A673 (cell line): ENCODE measurements at regions of chr22 and their contacts with region 1.

Region 1: GRCh38 chr22:29040385-29041275 is 21.0 kb downstream of the C22orf31 start:
- DNase-seq: peak; percentile 83
- H3K4me3 ChIP-seq: no peak overlapping the region
- H3K27ac ChIP-seq: no peak overlapping the region
- H3K4me1 ChIP-seq: no peaks in the 10 kb centered on the region
- H3K27me3 ChIP-seq: no peaks in the 10 kb centered on the region
- CTCF ChIP-seq: peak; percentile 98

Region 2: DNA sequence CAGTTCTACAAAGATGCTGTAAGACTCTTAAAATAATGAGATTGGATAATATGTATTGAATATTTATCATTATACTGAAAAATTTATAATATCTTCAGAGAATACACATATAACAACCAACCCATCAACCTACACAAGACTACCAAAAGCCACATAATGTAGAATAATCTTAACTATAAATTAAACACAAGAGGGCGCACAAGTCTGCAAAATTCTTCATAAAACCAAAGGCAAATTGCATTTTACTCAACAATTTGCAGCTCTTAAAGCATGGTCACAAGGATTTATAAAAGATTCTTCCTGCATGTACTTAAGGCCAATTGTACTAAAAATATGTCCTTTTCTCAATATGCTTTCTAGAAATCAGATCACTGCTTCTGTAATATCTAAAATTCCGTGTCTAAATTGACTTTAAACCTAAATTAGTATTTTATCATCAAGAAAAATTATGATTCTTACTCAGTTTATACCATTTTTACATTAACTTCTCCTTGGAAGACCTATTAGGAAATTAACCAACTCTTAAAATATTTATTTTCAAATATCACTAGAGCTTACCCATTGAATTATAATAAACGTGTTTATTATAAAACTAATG is 440.0 kb before region 1 on chr22:
- CTCF ChIA-PET with region 1: interaction called, 9 read pairs
- POLR2A ChIA-PET with region 1: no interaction called
- intact Hi-C with region 1: loop called (anchors 1 kb)
- DNase-seq: peak; percentile 81
- H3K4me3 ChIP-seq: no peak overlapping the region
- H3K27ac ChIP-seq: no peak overlapping the region
- H3K4me1 ChIP-seq: peaks cover 20% of the 10 kb centered on the region
- H3K27me3 ChIP-seq: no peaks in the 10 kb centered on the region
- CTCF ChIP-seq: peak; percentile 68

Region 3: GRCh38 chr22:28841111-28841510 is 199.5 kb before region 1 on chr22:
- CTCF ChIA-PET with region 1: interaction called, 7 read pairs
- POLR2A ChIA-PET with region 1: interaction called, 15 read pairs
- intact Hi-C with region 1: no loop called
- DNase-seq: no peak
- H3K4me3 ChIP-seq: no peak overlapping the region
- H3K27ac ChIP-seq: no peak overlapping the region
- H3K4me1 ChIP-seq: no peaks in the 10 kb centered on the region
- H3K27me3 ChIP-seq: no peaks in the 10 kb centered on the region
- CTCF ChIP-seq: no peak

Region 4: DNA sequence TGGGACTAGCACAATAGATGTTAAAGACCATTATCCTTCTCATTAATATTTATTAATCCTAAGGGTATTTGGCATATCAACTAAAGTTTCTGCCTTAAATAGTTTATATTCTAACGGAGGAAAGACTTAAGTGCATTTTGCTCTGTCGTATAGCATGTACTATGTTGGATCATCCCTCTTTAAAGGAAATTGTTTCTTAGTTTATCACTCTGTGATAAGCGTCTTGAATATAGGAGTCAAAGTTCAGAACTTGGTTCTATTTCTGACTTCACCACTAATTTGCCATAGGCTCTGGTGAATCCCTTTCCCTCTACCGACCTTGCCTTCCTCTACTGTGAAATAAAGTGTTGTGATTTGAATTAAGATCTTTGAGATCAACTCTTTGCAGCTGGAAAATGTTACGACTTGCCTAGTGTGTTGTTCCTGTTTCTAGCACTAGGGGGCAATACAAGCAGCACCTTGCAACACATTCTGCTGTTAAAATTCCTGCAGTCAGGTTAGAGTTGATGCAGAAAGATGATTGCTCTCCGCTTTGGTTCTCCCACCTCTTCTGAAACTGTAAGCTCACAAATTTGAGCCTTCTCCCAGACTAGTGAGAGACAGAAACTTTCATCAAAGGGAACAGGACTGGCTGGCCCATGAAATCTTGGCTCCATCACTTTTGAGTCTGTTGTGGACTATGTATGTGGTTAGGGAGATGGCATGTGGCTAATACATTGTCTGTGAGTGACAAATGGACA is 185.1 kb before region 1 on chr22:
- CTCF ChIA-PET with region 1: interaction called, 54 read pairs
- POLR2A ChIA-PET with region 1: no interaction called
- intact Hi-C with region 1: loop called (anchors 1 kb)
- DNase-seq: peak; percentile 76
- H3K4me3 ChIP-seq: no peak overlapping the region
- H3K27ac ChIP-seq: no peak overlapping the region
- H3K4me1 ChIP-seq: no peaks in the 10 kb centered on the region
- H3K27me3 ChIP-seq: no peaks in the 10 kb centered on the region
- CTCF ChIP-seq: peak; percentile 95

Region 5: GRCh38 chr22:28958611-28959010 is 82.0 kb before region 1 on chr22:
- CTCF ChIA-PET with region 1: no interaction called
- POLR2A ChIA-PET with region 1: no interaction called
- intact Hi-C with region 1: no loop called
- DNase-seq: no peak
- H3K4me3 ChIP-seq: no peak overlapping the region
- H3K27ac ChIP-seq: no peak overlapping the region
- H3K4me1 ChIP-seq: peaks cover under 1% of the 10 kb centered on the region
- H3K27me3 ChIP-seq: no peaks in the 10 kb centered on the region
- CTCF ChIP-seq: no peak

Region 6: GRCh38 chr22:29105468-29105867 is 64.8 kb after region 1 on chr22:
- CTCF ChIA-PET with region 1: no interaction called
- POLR2A ChIA-PET with region 1: no interaction called
- intact Hi-C with region 1: no loop called
- DNase-seq: no peak
- H3K4me3 ChIP-seq: no peak overlapping the region
- H3K27ac ChIP-seq: no peak overlapping the region
- H3K4me1 ChIP-seq: peaks cover 37% of the 10 kb centered on the region
- H3K27me3 ChIP-seq: no peaks in the 10 kb centered on the region
- CTCF ChIP-seq: no peak

Region 7: GRCh38 chr22:29117799-29118477 is 77.3 kb after region 1 on chr22:
- CTCF ChIA-PET with region 1: no interaction called
- POLR2A ChIA-PET with region 1: no interaction called
- intact Hi-C with region 1: no loop called
- DNase-seq: peak; percentile 48
- H3K4me3 ChIP-seq: no peak overlapping the region
- H3K27ac ChIP-seq: no peak overlapping the region
- H3K4me1 ChIP-seq: no peaks in the 10 kb centered on the region
- H3K27me3 ChIP-seq: no peaks in the 10 kb centered on the region
- CTCF ChIP-seq: no peak